HCT116 (cell line): ENCODE measurements at regions of chr21 and their contacts with region 1.

Region 1: GRCh38 chr21:39388038-39388810 is 39.3 kb upstream of the HMGN1 start:
- DNase-seq: peak; percentile 64
- ATAC-seq: peak; percentile 96
- H3K4me3 ChIP-seq: peak overlapping the region; percentile 49 to 54
- H3K27ac ChIP-seq: peak overlapping the region; percentile 64
- H3K4me1 ChIP-seq: peaks cover 4 to 9% of the 10 kb centered on the region in 2 experiments; a peak in 2 of 4 replicates
- H3K27me3 ChIP-seq: no peaks in the 10 kb centered on the region
- CTCF ChIP-seq: peak; percentile 36 to 95 (median 86); a peak in 4 of 6 replicates
- POLR2A ChIP-seq: no peak
- RAD21 ChIP-seq: peak; percentile 84

Region 2: GRCh38 chr21:38159355-38159754 is 1228.9 kb before region 1 on chr21:
- CTCF ChIA-PET with region 1: no interaction called
- POLR2A ChIA-PET with region 1: no interaction called
- RAD21 ChIA-PET with region 1: no interaction called
- intact Hi-C with region 1: loop called (anchors 10 kb)
- DNase-seq: peak; percentile 28
- ATAC-seq: peak; percentile 58
- H3K4me3 ChIP-seq: no peak overlapping the region
- H3K27ac ChIP-seq: no peak overlapping the region
- H3K4me1 ChIP-seq: no peaks in the 10 kb centered on the region
- H3K27me3 ChIP-seq: no peaks in the 10 kb centered on the region
- CTCF ChIP-seq: peak in 2 of 3 experiments; percentile 63 to 74; a peak in 4 of 6 replicates
- POLR2A ChIP-seq: no peak
- RAD21 ChIP-seq: no peak

Region 3: DNA sequence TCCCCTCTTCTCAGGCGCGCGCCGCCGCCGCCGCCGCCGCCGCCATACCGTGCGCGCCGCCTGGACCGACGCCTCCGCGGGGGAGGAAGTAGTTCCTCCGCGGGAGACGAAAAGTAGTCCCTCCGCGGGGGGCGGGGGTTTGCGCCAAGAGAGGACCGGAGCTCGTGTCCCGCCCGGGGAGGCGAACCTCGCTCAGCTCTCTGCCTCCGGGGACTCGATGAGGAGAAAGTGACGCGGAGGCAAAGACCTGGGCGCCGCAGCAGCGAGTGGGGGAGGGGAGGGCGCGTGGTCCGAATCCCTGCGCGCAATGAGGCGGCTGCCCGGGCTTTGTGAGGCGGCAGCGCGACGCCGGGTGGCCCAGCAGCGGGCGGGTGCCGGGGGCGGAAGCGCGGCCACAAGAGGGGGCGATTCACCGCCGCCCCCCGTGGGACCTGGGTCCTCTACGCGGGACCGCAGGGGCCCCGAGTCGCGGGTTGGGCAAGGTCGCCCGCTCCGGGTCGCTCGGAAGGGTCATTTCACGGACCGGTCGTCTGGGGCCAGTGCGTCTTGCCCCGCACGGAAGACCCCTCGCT is 74.6 kb before region 1 on chr21 and contains the start of gene BRWD1:
- CTCF ChIA-PET with region 1: interaction called, 4 read pairs
- POLR2A ChIA-PET with region 1: no interaction called
- RAD21 ChIA-PET with region 1: no interaction called
- intact Hi-C with region 1: loop called (anchors 1 kb)
- DNase-seq: peak; percentile 58
- ATAC-seq: peak; percentile 65
- H3K4me3 ChIP-seq: peak within 1 kb of the TSS; percentile 51 to 71
- H3K27ac ChIP-seq: peak within 1 kb of the TSS; percentile 70
- H3K4me1 ChIP-seq: peaks cover 10 to 19% of the 10 kb centered on the region in 2 experiments; a peak in 3 of 4 replicates
- H3K27me3 ChIP-seq: no peaks in the 10 kb centered on the region
- CTCF ChIP-seq: no peak
- POLR2A ChIP-seq: peak; percentile 62
- RAD21 ChIP-seq: 0 out of 2 replicates have a peak, but pooled peaks have one; percentile 18
- total RNA-seq, gene BRWD1: 33.1 TPM

Region 4: DNA sequence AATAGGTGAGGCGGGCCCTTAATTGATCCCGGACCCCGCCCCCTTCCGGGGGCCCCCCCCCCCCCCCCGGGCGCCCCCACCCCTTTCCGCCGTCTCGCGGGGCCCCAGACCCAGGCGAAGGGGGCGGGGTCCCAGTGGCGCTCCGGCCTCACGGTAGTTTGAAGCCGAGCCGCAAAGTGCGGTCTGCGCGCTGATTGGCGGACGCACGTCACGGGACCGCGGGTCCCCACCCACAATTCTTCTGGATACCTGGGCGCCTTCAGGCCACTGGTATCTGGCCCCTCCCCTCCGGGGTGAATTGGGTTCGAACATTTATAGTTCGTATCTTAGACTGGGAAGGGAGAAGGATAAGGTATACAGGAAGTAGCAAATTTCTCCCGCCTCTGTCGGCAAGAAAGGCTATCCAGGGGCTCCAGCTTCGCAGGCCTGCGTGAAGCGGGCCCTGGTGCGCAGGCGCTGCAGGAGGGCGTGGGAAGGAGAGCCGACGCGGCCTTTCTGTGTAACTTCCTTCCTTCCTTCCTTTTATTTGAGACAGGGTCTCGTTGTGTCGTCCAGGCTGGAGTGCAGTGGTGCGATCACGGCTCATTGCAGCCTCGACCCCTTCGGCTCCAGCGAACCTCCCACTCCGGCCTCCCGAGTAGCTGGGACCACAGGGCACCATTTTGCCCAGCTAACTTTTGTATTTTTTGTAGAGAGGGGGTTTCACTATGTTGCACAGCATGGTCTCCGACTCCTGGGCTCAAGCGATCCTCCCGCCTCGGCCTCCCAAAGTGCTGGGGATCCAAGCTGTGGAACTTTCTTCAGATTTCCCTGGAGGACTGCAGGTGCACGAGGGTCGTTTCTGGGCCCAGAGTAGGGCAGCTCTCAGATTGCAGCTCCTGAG is 38.8 kb before region 1 on chr21:
- CTCF ChIA-PET with region 1: no interaction called
- POLR2A ChIA-PET with region 1: no interaction called
- RAD21 ChIA-PET with region 1: no interaction called
- intact Hi-C with region 1: loop called (anchors 2 kb)
- DNase-seq: peak; percentile 89
- ATAC-seq: peak; percentile 87
- H3K4me3 ChIP-seq: peak overlapping the region; percentile 57 to 59
- H3K27ac ChIP-seq: peak overlapping the region; percentile 96
- H3K4me1 ChIP-seq: peaks cover 5 to 22% of the 10 kb centered on the region in 2 experiments
- H3K27me3 ChIP-seq: no peaks in the 10 kb centered on the region
- CTCF ChIP-seq: no peak
- POLR2A ChIP-seq: no peak
- RAD21 ChIP-seq: no peak

Region 5: GRCh38 chr21:39518138-39518846 is 130.1 kb after region 1 on chr21:
- CTCF ChIA-PET with region 1: no interaction called
- POLR2A ChIA-PET with region 1: no interaction called
- RAD21 ChIA-PET with region 1: no interaction called
- intact Hi-C with region 1: no loop called
- DNase-seq: peak; percentile 71
- ATAC-seq: peak; percentile 99
- H3K4me3 ChIP-seq: no peak overlapping the region
- H3K27ac ChIP-seq: no peak overlapping the region
- H3K4me1 ChIP-seq: peaks cover 0 to 2% of the 10 kb centered on the region in 2 experiments; a peak in 1 of 4 replicates
- H3K27me3 ChIP-seq: no peaks in the 10 kb centered on the region
- CTCF ChIP-seq: peak; percentile 74 to 92 (median 88); a peak in 5 of 6 replicates
- POLR2A ChIP-seq: no peak
- RAD21 ChIP-seq: peak; percentile 88